ENCODE measurements at regions of chr18 and their contacts with region 1.

Region 1: GRCh38 chr18:23918401-23919032 is 96.0 kb upstream of the TTC39C start:
- DNase-seq: peak; percentile 70
- H3K4me3 ChIP-seq: no peak overlapping the region
- H3K27ac ChIP-seq: no peak overlapping the region
- H3K4me1 ChIP-seq: no peaks in the 10 kb centered on the region
- H3K27me3 ChIP-seq: no peaks in the 10 kb centered on the region
- CTCF ChIP-seq: peak; percentile 79 to 80
- POLR2A ChIP-seq: no peak

Region 2: GRCh38 chr18:23515911-23516546 is 402.5 kb before region 1 on chr18:
- CTCF ChIA-PET with region 1: interaction called, 5 read pairs
- POLR2A ChIA-PET with region 1: no interaction called
- dilution Hi-C with region 1: no loop called
- intact Hi-C with region 1: loop called (anchors 10 kb)
- DNase-seq: peak; percentile 71
- H3K4me3 ChIP-seq: no peak overlapping the region
- H3K27ac ChIP-seq: no peak overlapping the region
- H3K4me1 ChIP-seq: peaks cover 11% of the 10 kb centered on the region
- H3K27me3 ChIP-seq: no peaks in the 10 kb centered on the region
- CTCF ChIP-seq: peak; percentile 89 to 94
- POLR2A ChIP-seq: no peak

Region 3: GRCh38 chr18:23629444-23629946 is 289.0 kb before region 1 on chr18:
- CTCF ChIA-PET with region 1: interaction called, 11 read pairs
- POLR2A ChIA-PET with region 1: no interaction called
- dilution Hi-C with region 1: no loop called
- intact Hi-C with region 1: no loop called
- DNase-seq: no peak
- H3K4me3 ChIP-seq: no peak overlapping the region
- H3K27ac ChIP-seq: no peak overlapping the region
- H3K4me1 ChIP-seq: peaks cover 23% of the 10 kb centered on the region
- H3K27me3 ChIP-seq: peaks cover 0 to 4% of the 10 kb centered on the region in 2 experiments
- CTCF ChIP-seq: no peak
- POLR2A ChIP-seq: no peak

Region 4: DNA sequence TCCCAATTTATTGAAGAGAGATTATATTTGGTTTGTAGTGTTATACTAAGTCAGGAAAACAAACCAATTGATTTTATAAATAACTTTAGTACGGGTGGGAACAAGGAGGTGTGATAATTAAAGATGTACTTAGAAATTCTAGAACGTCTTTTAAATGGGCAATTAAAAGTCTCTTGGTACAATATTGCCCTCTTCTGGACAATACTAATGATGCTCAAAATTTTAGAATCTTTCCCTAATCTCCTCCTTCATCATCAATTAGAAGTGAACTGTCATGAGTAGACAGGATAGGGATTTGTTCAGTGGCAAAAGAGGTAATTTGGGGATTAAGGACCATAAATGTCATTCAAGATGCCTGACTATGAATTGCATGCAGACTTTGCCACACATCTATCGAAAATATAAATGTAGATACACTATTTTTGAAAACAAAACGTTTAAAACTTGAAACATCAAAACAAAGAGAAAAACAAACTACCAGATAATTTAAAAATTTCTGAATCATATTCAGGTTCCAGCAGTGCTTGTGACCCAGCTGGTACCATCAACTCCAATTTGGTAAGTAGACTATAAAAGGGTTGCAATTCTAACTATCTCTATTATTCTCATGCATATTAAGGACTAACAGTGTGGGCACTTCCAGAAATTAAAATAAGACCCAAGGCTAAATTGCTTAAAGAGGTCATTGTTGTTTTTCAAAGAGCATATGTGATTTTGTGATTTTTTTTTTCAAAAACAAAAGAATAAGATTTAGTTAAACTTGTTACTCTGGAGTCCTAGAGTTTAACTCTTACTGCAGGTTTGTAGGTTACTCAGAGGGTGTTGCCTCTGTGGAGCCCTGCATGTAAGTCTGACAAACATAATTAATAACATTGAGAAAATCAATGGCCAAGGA is 105.7 kb before region 1 on chr18:
- CTCF ChIA-PET with region 1: interaction called, 15 read pairs
- POLR2A ChIA-PET with region 1: no interaction called
- dilution Hi-C with region 1: no loop called
- intact Hi-C with region 1: loop called (anchors 1 kb)
- DNase-seq: peak; percentile 58
- H3K4me3 ChIP-seq: no peak overlapping the region
- H3K27ac ChIP-seq: no peak overlapping the region
- H3K4me1 ChIP-seq: no peaks in the 10 kb centered on the region
- H3K27me3 ChIP-seq: no peaks in the 10 kb centered on the region
- CTCF ChIP-seq: peak; percentile 21 to 30
- POLR2A ChIP-seq: no peak

Region 5: GRCh38 chr18:23837591-23837990 is 80.9 kb before region 1 on chr18:
- CTCF ChIA-PET with region 1: interaction called, 30 read pairs
- POLR2A ChIA-PET with region 1: no interaction called
- dilution Hi-C with region 1: no loop called
- intact Hi-C with region 1: no loop called
- DNase-seq: peak; percentile 82
- H3K4me3 ChIP-seq: no peak overlapping the region
- H3K27ac ChIP-seq: peak overlapping the region; percentile 67
- H3K4me1 ChIP-seq: peaks cover 7% of the 10 kb centered on the region
- H3K27me3 ChIP-seq: no peaks in the 10 kb centered on the region
- CTCF ChIP-seq: no peak
- POLR2A ChIP-seq: no peak

Region 6: DNA sequence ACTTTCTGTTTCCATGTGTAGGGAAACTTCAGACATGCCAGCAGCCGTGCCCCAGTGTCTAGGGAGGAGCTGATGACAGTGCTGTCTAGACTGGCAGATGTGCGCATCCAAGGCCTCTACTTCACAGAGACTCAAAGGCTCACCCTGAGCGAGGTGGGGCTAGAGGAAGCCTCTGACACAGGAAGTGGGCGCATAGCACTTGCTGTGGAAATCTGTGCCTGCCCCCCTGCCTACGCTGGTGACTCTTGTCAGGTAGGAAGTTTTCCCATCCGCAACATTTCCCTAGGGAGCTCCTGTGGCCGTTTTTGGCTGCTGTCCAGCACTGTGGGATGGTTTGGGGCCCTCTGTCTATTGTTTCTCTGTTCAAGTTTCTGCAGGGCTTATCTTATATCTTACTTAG is 47.1 kb before region 1 on chr18:
- CTCF ChIA-PET with region 1: interaction called, 10 read pairs
- POLR2A ChIA-PET with region 1: no interaction called
- dilution Hi-C with region 1: no loop called
- intact Hi-C with region 1: no loop called
- DNase-seq: peak; percentile 47
- H3K4me3 ChIP-seq: no peak overlapping the region
- H3K27ac ChIP-seq: no peak overlapping the region
- H3K4me1 ChIP-seq: peaks cover 4% of the 10 kb centered on the region
- H3K27me3 ChIP-seq: no peaks in the 10 kb centered on the region
- CTCF ChIP-seq: no peak
- POLR2A ChIP-seq: no peak

Region 7: GRCh38 chr18:23900994-23901393 is 17.5 kb before region 1 on chr18:
- CTCF ChIA-PET with region 1: interaction called, 14 read pairs
- POLR2A ChIA-PET with region 1: interaction called, 8 read pairs
- dilution Hi-C with region 1: no loop called
- intact Hi-C with region 1: no loop called
- DNase-seq: peak; percentile 94
- H3K4me3 ChIP-seq: no peak overlapping the region
- H3K27ac ChIP-seq: peak overlapping the region; percentile 52
- H3K4me1 ChIP-seq: peaks cover 11% of the 10 kb centered on the region
- H3K27me3 ChIP-seq: no peaks in the 10 kb centered on the region
- CTCF ChIP-seq: no peak
- POLR2A ChIP-seq: no peak